ENCODE measurements at regions of chr2 and their contacts with region 1.

Region 1: DNA sequence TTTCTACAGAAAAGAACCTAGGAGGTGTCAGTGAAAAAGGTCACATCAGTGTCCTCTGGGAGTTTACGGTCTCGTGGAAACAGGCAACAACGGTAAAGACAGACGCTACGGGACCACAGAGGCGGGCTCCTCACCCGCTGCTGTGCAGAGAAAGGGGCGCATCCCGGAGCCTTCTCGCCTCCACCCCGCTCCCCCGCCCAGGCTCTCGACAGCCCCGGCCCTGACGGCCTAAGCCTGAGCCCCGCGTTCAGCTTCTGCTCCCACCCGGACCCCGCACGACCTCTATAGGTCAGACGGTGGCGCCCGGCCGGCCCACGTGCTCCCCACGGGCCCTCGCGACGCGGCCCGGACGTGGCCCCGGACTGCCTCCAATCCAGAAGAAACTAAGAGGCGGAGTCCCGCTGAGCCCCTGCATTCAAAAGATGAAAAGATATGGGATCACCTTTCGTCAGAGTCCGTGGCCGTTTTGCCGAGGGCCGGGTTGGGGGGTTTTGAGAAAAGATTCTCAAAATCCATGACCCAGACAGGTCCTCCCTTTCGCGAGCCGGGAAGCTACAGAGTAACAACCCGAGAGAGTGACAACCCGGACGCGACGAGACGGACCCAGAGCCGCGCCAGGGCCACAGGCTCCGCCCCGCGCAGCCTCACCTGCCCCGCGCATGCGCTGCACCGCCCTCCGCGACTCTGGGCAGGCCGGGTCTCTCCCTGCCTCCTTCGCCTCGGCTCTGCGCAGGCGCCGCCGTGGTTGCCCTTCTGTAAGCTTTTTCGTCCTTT is at the start of gene ZC3H8:
- DNase-seq: peak; percentile 87 to 95 (median 92)
- H3K4me3 ChIP-seq: peak within 1 kb of the TSS; percentile 59 to 95 (median 83)
- H3K27ac ChIP-seq: peak within 1 kb of the TSS; percentile 52 to 97 (median 87)
- H3K27me3 ChIP-seq: no peaks in the 10 kb centered on the region
- CTCF ChIP-seq: peak in 40 of 56 donors; percentile 2 to 58 (median 30)
- total RNA-seq, gene ZC3H8: 14.5 to 44.4 (median 27.2) TPM

Region 2: GRCh38 chr2:111883661-111884591 is 370.7 kb before region 1 on chr2 and contains the start of gene ANAPC1:
- intact Hi-C with region 1: loop called in 1 of 2 experiments (anchors 10 kb)
- DNase-seq: peak; percentile 76 to 91 (median 86)
- H3K4me3 ChIP-seq: peak within 1 kb of the TSS; percentile 66 to 100 (median 94)
- H3K27ac ChIP-seq: peak within 1 kb of the TSS in 58 of 59 donors; percentile 1 to 91 (median 74)
- H3K27me3 ChIP-seq: no peaks in the 10 kb centered on the region
- CTCF ChIP-seq: peak in 27 of 56 donors; percentile 4 to 48 (median 17)
- total RNA-seq, gene ANAPC1: 31.1 to 65.0 (median 45.8) TPM

Region 3: GRCh38 chr2:112004253-112004645 is 250.4 kb before region 1 on chr2:
- intact Hi-C with region 1: no loop called
- DNase-seq: peak in 5 of 10 donors; percentile 10 to 54 (median 40)
- H3K4me3 ChIP-seq: no peak overlapping the region
- H3K27ac ChIP-seq: peak overlapping the region in 3 of 59 donors; percentile 22 to 42 (median 32)
- H3K27me3 ChIP-seq: no peaks in the 10 kb centered on the region
- CTCF ChIP-seq: no peak

Region 4: GRCh38 chr2:112054847-112055729 is 199.6 kb before region 1 on chr2 and contains the start of gene TMEM87B:
- intact Hi-C with region 1: loop called in 1 of 2 experiments (anchors 5 kb)
- DNase-seq: peak; percentile 90 to 97 (median 95)
- H3K4me3 ChIP-seq: peak within 1 kb of the TSS; percentile 62 to 98 (median 89)
- H3K27ac ChIP-seq: peak within 1 kb of the TSS; percentile 56 to 97 (median 93)
- H3K27me3 ChIP-seq: no peaks in the 10 kb centered on the region
- CTCF ChIP-seq: peak in 7 of 56 donors; percentile 6 to 24 (median 11)
- total RNA-seq, gene TMEM87B: 7.2 to 27.9 (median 14.7) TPM

Region 5: GRCh38 chr2:112121682-112122254 is 132.9 kb before region 1 on chr2:
- intact Hi-C with region 1: loop called (anchors 10 kb)
- DNase-seq: no peak
- H3K4me3 ChIP-seq: no peak overlapping the region
- H3K27ac ChIP-seq: no peak overlapping the region
- H3K27me3 ChIP-seq: no peaks in the 10 kb centered on the region
- CTCF ChIP-seq: peak; percentile 48 to 82 (median 70)

Region 6: DNA sequence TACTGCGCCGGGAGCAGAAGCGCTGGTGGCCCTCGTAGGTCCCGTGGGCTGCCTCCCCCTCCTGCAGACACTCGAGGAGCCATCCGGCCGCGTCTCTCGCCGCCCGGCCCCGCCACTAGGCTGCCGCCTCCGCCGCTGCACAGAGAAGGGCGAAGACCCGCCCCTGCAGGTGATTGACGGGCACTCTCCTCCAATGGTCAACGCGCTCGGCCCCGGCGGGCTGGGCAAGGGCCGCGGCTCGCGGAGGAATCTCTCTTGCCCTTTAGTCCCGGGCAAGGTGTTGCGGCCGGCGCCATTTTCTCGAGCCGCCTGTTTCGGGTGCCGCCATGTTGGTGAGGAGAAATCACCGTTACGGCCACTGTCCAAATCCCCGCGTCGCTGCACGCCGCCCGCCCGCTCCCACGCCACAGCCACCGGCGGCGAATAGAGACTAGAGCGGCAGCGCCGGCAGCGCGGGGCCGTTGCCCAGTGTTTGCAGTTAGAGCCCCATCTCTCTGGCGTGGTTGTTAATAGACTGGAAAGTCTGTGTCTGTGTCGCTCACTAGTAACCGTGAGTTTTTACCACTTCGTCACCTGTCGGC is 20.7 kb after region 1 on chr2 and contains the start of gene ZC3H6:
- intact Hi-C with region 1: loop called in 1 of 2 experiments (anchors 2 kb)
- DNase-seq: peak; percentile 97 to 100 (median 99)
- H3K4me3 ChIP-seq: peak within 1 kb of the TSS; percentile 68 to 99 (median 90)
- H3K27ac ChIP-seq: peak within 1 kb of the TSS; percentile 98 to 100 (median 100)
- H3K27me3 ChIP-seq: no peaks in the 10 kb centered on the region
- CTCF ChIP-seq: peak in 49 of 56 donors; percentile 9 to 68 (median 42)
- total RNA-seq, gene ZC3H6: 20.4 to 50.4 (median 36.4) TPM

Region 7: DNA sequence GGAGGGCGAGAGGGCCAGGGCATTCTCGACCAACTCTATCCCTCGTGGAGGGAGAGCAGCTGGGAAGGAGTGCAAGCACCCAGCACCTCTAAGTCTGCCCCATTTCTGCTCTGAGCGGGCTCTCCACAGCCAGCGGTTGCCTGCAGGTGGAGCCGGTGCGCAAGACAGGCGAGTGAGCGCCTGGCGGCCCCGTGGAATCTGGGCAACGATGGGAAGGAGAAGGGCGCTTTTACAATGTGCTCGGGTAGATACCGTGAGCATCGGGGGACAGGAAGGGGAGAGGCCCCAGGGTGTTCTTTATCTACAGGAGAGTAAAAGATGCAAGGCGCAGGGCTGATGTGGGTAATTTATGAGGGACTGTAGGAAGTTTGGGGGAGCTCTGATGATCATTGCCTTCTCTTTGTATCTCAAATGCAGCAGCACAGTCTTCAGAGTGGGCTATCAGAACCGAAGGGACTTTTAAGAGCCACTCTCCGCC is 226.4 kb after region 1 on chr2:
- intact Hi-C with region 1: loop called in 1 of 2 experiments (anchors 5 kb)
- DNase-seq: peak; percentile 77 to 92 (median 86)
- H3K4me3 ChIP-seq: peak overlapping the region; percentile 57 to 97 (median 83)
- H3K27ac ChIP-seq: peak overlapping the region; percentile 74 to 97 (median 91)
- H3K27me3 ChIP-seq: no peaks in the 10 kb centered on the region
- CTCF ChIP-seq: peak; percentile 51 to 95 (median 83)